Esophagus muscularis mucosa (tissue), 4 donors: ENCODE measurements at regions of chr10 and their contacts with region 1.

Region 1: GRCh38 chr10:13776861-13777311 is 190.1 kb downstream of the PRPF18 start:
- DNase-seq: no peak
- H3K4me3 ChIP-seq: no peak overlapping the region
- H3K27ac ChIP-seq: no peak overlapping the region
- H3K4me1 ChIP-seq: peaks cover 0 to 19% (median 9%) of the 10 kb centered on the region in 4 donors
- H3K27me3 ChIP-seq: no peaks in the 10 kb centered on the region
- CTCF ChIP-seq: no peak
- EP300 ChIP-seq: no peak
- POLR2A ChIP-seq: no peak

Region 2: GRCh38 chr10:13613519-13613918 is 163.4 kb before region 1 on chr10:
- intact Hi-C with region 1: loop called (anchors 2 kb)
- DNase-seq: no peak
- H3K4me3 ChIP-seq: no peak overlapping the region
- H3K27ac ChIP-seq: peak overlapping the region in 1 of 4 donors; percentile 65
- H3K4me1 ChIP-seq: peaks cover 0 to 27% (median 26%) of the 10 kb centered on the region in 4 donors
- H3K27me3 ChIP-seq: no peaks in the 10 kb centered on the region
- CTCF ChIP-seq: peak; percentile 51 to 63 (median 54)
- EP300 ChIP-seq: no peak
- POLR2A ChIP-seq: no peak